Endothelial cell of umbilical vein (primary cell): ENCODE measurements at regions of chr17 and their contacts with region 1.

Region 1: GRCh38 chr17:63946440-63947367 is 14.6 kb upstream of the CD79B start:
- DNase-seq: peak; percentile 23
- H3K4me3 ChIP-seq: no peak overlapping the region
- H3K27ac ChIP-seq: no peak overlapping the region
- H3K4me1 ChIP-seq: no peaks in the 10 kb centered on the region
- H3K27me3 ChIP-seq: no peaks in the 10 kb centered on the region
- CTCF ChIP-seq: peak; percentile 38 to 94
- POLR2A ChIP-seq: no peak

Region 2: DNA sequence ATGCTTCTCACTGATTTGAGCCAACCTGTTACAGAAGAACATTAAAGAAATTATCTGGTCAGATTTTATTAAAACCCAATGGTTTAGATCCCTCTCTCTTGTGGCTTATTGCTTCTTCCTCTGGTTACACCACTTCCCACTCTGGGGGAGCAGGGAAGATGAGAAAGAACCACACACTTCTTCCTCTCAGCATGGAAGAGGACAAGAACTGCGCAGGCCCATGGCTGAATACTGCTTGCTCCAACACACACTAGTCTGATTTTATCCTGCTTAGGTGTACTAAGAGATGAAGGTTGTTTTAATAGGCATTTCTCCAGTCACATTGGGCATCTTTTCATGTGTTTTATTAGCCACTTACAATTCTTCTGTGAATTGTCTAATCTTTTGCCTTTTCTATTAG is 296.9 kb before region 1 on chr17:
- CTCF ChIA-PET with region 1: no interaction called
- POLR2A ChIA-PET with region 1: no interaction called
- dilution Hi-C with region 1: no loop called
- intact Hi-C with region 1: no loop called
- DNase-seq: no peak
- H3K4me3 ChIP-seq: no peak overlapping the region
- H3K27ac ChIP-seq: no peak overlapping the region
- H3K4me1 ChIP-seq: no peaks in the 10 kb centered on the region
- H3K27me3 ChIP-seq: no peaks in the 10 kb centered on the region
- CTCF ChIP-seq: no peak
- POLR2A ChIP-seq: no peak

Region 3: GRCh38 chr17:63919311-63919723 is 27.4 kb before region 1 on chr17:
- CTCF ChIA-PET with region 1: interaction called, 108 read pairs
- POLR2A ChIA-PET with region 1: no interaction called
- dilution Hi-C with region 1: no loop called
- intact Hi-C with region 1: loop called (anchors 1 kb)
- DNase-seq: peak; percentile 68
- H3K4me3 ChIP-seq: no peak overlapping the region
- H3K27ac ChIP-seq: no peak overlapping the region
- H3K4me1 ChIP-seq: no peaks in the 10 kb centered on the region
- H3K27me3 ChIP-seq: peaks cover 0 to 3% of the 10 kb centered on the region in 2 experiments
- CTCF ChIP-seq: peak; percentile 75 to 89
- POLR2A ChIP-seq: no peak

Region 4: DNA sequence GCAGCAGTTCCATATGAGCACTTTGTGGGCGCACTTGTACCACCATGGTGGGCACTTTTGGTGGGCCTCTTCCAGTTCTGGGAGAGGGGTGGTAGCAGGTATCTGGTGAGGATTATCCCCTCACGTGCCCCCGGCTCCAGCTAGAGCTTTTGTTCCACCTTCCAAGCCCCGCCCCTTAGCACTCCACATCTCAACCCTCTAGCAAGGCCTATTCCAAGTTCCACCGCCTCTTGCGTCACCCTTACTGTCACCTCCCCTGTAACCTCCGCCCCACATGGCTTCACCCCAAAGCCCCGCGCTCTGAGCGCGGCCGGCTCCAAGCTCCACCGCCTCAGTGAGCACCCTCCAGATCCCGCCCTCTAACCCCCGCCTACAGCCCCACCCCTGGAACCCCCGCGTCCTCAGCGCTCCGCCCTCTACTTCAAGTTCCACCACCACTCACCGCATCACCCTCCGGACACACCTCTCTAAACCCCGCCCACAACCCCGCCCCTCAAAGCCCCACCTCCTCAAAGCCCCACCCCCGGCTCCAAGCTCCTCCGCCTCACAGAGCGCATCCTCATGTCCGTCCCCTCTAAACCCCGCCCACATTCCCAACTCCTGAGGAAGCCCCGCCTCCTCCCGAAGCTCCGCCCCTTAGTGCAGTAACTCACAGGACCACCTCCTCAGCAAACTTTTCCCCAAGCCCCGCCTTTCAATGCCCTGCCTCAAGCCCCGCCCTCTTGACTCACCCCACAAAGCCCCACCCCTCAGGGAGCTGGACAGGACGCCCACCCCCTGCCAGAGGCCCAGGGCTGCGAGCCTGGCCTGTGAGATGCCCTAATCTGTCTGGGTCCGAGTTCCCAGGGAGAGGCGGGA is 14.9 kb after region 1 on chr17:
- CTCF ChIA-PET with region 1: interaction called, 50 read pairs
- POLR2A ChIA-PET with region 1: no interaction called
- dilution Hi-C with region 1: no loop called
- intact Hi-C with region 1: no loop called
- DNase-seq: peak; percentile 70
- H3K4me3 ChIP-seq: no peak overlapping the region
- H3K27ac ChIP-seq: no peak overlapping the region
- H3K4me1 ChIP-seq: no peaks in the 10 kb centered on the region
- H3K27me3 ChIP-seq: no peaks in the 10 kb centered on the region
- CTCF ChIP-seq: no peak
- POLR2A ChIP-seq: no peak

Region 5: GRCh38 chr17:63974594-63975192 is 28.0 kb after region 1 on chr17:
- CTCF ChIA-PET with region 1: interaction called, 27 read pairs
- POLR2A ChIA-PET with region 1: no interaction called
- dilution Hi-C with region 1: no loop called
- intact Hi-C with region 1: no loop called
- DNase-seq: peak; percentile 51
- H3K4me3 ChIP-seq: no peak overlapping the region
- H3K27ac ChIP-seq: peak overlapping the region; percentile 13
- H3K4me1 ChIP-seq: peaks cover 13% of the 10 kb centered on the region
- H3K27me3 ChIP-seq: no peaks in the 10 kb centered on the region
- CTCF ChIP-seq: no peak
- POLR2A ChIP-seq: no peak

Region 6: GRCh38 chr17:63991611-63992010 is 44.9 kb after region 1 on chr17:
- CTCF ChIA-PET with region 1: interaction called, 42 read pairs
- POLR2A ChIA-PET with region 1: no interaction called
- dilution Hi-C with region 1: no loop called
- intact Hi-C with region 1: loop called (anchors 2 kb)
- DNase-seq: no peak
- H3K4me3 ChIP-seq: no peak overlapping the region
- H3K27ac ChIP-seq: no peak overlapping the region
- H3K4me1 ChIP-seq: peaks cover 5% of the 10 kb centered on the region
- H3K27me3 ChIP-seq: peaks cover 2 to 6% of the 10 kb centered on the region in 2 experiments
- CTCF ChIP-seq: no peak
- POLR2A ChIP-seq: no peak